ENCODE measurements at regions of chr12 and their contacts with region 1.

Region 1: DNA sequence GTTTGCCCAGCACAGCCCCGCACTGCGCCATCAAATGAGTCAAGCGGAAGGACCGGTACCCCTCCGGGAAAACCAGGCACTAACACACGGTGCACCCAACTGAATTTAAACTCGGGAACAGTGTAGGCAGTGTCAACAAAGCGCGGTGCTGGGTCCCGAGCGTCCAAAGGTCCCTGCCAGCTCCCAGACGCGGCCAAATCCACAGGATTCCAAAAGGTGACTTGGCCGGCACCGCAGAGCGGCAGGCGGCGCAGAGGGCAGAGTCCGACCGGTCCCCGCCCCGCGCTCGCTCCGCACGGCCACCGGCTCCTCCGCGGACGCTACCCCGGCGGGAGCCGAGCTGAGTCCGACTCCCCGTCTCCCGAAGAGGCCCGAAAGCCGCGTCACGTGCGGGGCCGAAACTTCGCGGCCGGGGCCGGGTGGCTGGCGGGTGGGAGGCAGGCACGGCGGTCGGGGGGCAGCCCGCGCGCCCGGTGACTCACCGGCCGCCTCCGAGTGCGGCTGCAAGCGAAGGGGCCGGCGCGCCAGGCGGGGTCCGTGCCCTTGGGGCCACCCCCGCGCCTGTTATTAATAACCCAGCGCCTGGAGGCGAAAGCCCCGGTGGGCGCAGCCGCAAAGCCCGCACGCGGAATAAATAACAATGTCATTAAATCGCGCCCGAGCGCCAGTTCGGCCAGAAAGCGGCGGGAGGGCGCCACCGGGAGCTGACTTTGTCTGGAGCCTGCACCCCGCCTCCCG is 863 bp downstream of the DENND5B start:
- DNase-seq: peak; percentile 47 to 94 (median 66)

Region 2: GRCh38 chr12:31491819-31492598 is 98.1 kb before region 1 on chr12:
- intact Hi-C with region 1: loop called (anchors 10 kb)
- DNase-seq: no peak

Region 3: DNA sequence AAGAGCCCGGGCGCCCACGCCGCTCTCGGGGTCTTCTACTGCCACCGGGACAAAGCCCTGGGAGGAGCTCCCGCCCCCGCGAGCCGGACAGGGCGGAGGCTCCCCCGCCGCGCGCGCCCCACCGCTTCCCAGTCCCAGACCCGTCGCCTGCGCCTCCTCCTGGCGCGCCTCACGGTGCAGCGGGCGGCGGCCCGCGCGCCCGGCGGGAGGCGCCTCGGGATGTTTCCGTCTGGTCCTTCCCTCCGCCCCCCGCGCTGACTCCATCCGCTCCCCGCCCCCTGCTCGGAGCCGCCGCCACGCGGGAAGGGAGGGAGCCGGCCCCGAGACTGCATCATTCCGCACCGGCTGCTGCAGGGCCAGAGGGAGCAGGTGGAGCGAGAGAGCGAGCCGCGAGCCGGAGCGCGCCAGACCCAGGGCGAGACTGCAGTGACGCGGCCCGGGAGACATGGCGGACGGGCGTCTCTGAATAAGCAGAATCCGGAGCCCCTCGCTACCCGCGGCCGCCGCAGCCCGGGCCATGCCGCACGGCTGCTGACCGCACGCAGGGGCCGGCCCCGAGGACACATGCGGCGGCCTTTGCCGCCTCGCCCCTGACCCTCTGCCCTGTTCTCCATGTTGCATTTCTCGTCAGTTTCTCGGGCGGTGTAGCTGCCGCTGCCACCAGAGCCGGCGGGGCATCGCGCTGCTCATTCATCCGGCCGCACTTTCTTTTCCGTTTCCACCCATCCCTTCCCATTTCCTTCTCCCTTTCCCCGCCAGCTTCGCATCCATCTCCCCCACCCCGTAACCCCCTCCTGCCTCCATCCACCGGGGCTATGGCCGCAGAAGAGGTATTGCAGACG is 516.7 kb after region 1 on chr12 and contains the start of gene BICD1:
- intact Hi-C with region 1: loop called (anchors 5 kb)
- DNase-seq: peak; percentile 86 to 98 (median 90)

Measured in posterior cingulate gyrus (tissue), 11 donors.